Activated CD4-positive, alpha-beta T cell treated with anti-CD3 and anti-CD28 coated beads for 36 hours (primary cell): ENCODE measurements at regions of chr4 and their contacts with region 1.

Region 1: GRCh38 chr4:103046416-103047290 is 27.1 kb upstream of the SLC9B1 start:
- DNase-seq: peak; percentile 49
- ATAC-seq: peak; percentile 96
- H3K4me3 Mint-ChIP-seq: no peak overlapping the region
- H3K27ac Mint-ChIP-seq: no peak overlapping the region
- H3K4me1 Mint-ChIP-seq: peaks cover 10% of the 10 kb centered on the region
- H3K27me3 Mint-ChIP-seq: no peaks in the 10 kb centered on the region

Region 2: DNA sequence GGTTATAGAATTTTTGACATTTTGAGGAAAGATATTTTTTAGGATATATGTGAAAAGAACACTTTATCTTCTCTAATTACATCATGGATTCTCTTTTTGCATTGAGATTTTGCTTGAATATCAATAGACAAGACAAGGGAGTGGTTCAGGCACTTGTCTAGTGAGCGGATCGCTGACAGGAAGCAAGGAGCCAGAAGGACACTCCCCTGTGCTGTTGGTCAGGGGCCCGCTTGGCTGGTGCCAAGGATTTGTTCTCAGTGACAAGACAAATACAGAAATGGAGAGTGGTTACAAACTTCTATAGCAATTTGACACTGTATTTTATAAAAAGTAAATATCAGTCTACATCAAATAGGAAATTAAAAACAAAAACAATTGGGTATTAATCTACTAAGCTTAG is 87.2 kb before region 1 on chr4:
- CTCF ChIA-PET with region 1: no interaction called
- POLR2A ChIA-PET with region 1: no interaction called
- intact Hi-C with region 1: no loop called
- DNase-seq: no peak
- ATAC-seq: no peak
- H3K4me3 Mint-ChIP-seq: no peak overlapping the region
- H3K27ac Mint-ChIP-seq: no peak overlapping the region
- H3K4me1 Mint-ChIP-seq: no peaks in the 10 kb centered on the region
- H3K27me3 Mint-ChIP-seq: no peaks in the 10 kb centered on the region

Region 3: DNA sequence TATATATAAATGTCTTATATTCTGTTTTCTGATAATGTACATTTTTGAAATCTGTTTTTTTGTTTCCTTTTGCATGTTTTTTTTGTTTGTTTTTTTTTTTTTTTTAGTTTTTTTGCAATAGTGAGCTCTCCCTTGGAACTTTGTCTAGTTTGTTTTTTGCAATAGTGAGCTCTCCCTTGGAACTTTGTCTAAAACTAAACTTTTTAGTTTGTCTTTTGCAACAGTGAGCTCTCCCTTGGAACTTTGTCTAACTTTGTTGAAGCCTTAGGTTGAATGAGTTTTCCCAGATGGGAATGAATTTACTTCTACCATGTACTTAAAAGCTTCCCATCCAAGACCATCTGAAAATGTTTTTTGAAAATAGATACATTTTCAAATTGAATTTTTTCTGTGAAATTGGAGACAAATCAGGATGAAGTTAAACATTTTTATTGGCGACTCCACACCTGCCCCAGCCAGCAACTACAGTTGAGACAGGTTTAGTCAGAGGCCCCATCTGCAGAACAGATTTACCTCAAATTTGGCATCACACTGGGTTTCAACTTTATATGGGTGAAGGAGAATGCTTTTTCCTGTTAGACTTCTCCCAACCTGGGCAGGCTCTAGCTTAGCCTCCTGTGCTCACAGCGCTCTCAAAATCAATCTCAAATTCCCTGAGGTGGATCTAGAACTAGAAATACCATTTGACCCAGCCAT is 13.9 kb after region 1 on chr4:
- CTCF ChIA-PET with region 1: interaction called, 11 read pairs
- POLR2A ChIA-PET with region 1: no interaction called
- intact Hi-C with region 1: no loop called
- DNase-seq: no peak
- ATAC-seq: no peak
- H3K4me3 Mint-ChIP-seq: no peak overlapping the region
- H3K27ac Mint-ChIP-seq: no peak overlapping the region
- H3K4me1 Mint-ChIP-seq: no peaks in the 10 kb centered on the region
- H3K27me3 Mint-ChIP-seq: no peaks in the 10 kb centered on the region